Activated CD4-positive, alpha-beta T cell treated with anti-CD3 and anti-CD28 coated beads, Interleukin-2, amount 10 ng/mL, durations not matched to agents 24 days and 14 days (primary cell): ENCODE measurements at regions of chr13 and their contacts with region 1.

Region 1: GRCh38 chr13:27264181-27264580 is 6.4 kb upstream of the RASL11A start:
- DNase-seq: no peak
- H3K4me3 Mint-ChIP-seq: no peak overlapping the region
- H3K27ac Mint-ChIP-seq: no peak overlapping the region
- H3K4me1 Mint-ChIP-seq: peaks cover 15% of the 10 kb centered on the region
- H3K27me3 Mint-ChIP-seq: no peaks in the 10 kb centered on the region

Region 2: GRCh38 chr13:25306671-25307464 is 1957.3 kb before region 1 on chr13:
- intact Hi-C with region 1: loop called (anchors 5 kb)
- DNase-seq: no peak
- H3K4me3 Mint-ChIP-seq: no peak overlapping the region
- H3K27ac Mint-ChIP-seq: no peak overlapping the region
- H3K4me1 Mint-ChIP-seq: peaks cover 44% of the 10 kb centered on the region
- H3K27me3 Mint-ChIP-seq: no peaks in the 10 kb centered on the region

Region 3: DNA sequence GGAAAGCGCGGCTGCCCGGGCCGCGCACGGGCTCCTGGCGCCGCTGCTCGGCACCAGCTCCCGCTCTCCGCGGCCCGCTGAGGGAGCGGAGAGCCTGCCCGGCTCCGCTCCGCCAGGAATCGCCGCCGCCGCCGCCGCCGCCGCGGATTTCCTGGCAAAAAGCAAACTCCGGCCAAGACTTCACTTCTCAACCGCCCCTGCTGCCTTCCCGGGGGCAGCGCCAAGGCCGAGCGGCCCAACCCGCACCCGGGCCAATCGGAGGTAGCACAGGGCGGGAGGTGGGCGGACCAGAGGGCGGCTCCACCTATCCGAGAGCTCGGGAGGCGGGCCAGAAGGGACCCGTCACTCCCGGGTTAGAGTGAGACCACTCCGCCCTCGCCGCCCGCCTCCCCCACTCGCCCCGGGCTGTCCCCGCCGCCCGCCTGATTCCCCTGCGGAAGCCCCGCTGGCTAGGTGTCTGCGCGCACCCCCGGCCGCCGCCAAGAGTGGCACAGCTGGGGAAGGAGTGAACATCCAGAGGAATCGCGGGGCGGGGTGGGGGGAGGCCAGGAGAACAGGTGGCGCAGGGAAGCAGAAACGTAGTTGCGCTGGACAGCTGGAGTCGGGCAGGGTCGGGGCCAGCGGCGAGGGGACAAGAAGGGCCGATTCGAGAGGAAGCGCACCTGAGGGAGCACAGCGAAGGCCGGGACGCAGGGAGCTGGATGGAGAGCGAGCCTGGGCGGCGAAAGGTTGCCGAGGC is 356.4 kb after region 1 on chr13 and contains the start of gene LNX2:
- intact Hi-C with region 1: no loop called
- DNase-seq: peak; percentile 99
- H3K4me3 Mint-ChIP-seq: peak within 1 kb of the TSS; percentile 98
- H3K27ac Mint-ChIP-seq: peak within 1 kb of the TSS; percentile 93
- H3K4me1 Mint-ChIP-seq: peaks cover 44% of the 10 kb centered on the region
- H3K27me3 Mint-ChIP-seq: no peaks in the 10 kb centered on the region
- total RNA-seq, gene LNX2: 4.1 and 4.3 TPM in 2 replicates